Activated CD8-positive, alpha-beta T cell treated with anti-CD3 and anti-CD28 coated beads for 36 hours (primary cell): ENCODE measurements at regions of chr1 and their contacts with region 1.

Region 1: GRCh38 chr1:40951943-40952743 is 27.4 kb upstream of the CTPS1 start:
- DNase-seq: peak; percentile 68
- ATAC-seq: peak; percentile 67
- H3K4me3 Mint-ChIP-seq: no peak overlapping the region
- H3K27ac Mint-ChIP-seq: no peak overlapping the region
- H3K4me1 Mint-ChIP-seq: peaks cover 7% of the 10 kb centered on the region
- H3K27me3 Mint-ChIP-seq: peaks cover 15% of the 10 kb centered on the region
- CTCF ChIP-seq: peak; percentile 99

Region 2: GRCh38 chr1:40495315-40495903 is 456.7 kb before region 1 on chr1:
- CTCF ChIA-PET with region 1: no interaction called
- POLR2A ChIA-PET with region 1: no interaction called
- intact Hi-C with region 1: no loop called
- DNase-seq: no peak
- ATAC-seq: no peak
- H3K4me3 Mint-ChIP-seq: no peak overlapping the region
- H3K27ac Mint-ChIP-seq: no peak overlapping the region
- H3K4me1 Mint-ChIP-seq: peaks cover 2% of the 10 kb centered on the region
- H3K27me3 Mint-ChIP-seq: no peaks in the 10 kb centered on the region
- CTCF ChIP-seq: no peak

Region 3: GRCh38 chr1:40849801-40850592 is 102.1 kb before region 1 on chr1:
- CTCF ChIA-PET with region 1: interaction called, 73 read pairs
- POLR2A ChIA-PET with region 1: interaction called, 3 read pairs
- intact Hi-C with region 1: no loop called
- DNase-seq: peak; percentile 85
- ATAC-seq: peak; percentile 92
- H3K4me3 Mint-ChIP-seq: peak overlapping the region; percentile 22
- H3K27ac Mint-ChIP-seq: peak overlapping the region; percentile 49
- H3K4me1 Mint-ChIP-seq: peaks cover 12% of the 10 kb centered on the region
- H3K27me3 Mint-ChIP-seq: no peaks in the 10 kb centered on the region
- CTCF ChIP-seq: peak; percentile 86

Region 4: GRCh38 chr1:40862008-40862863 is 89.9 kb before region 1 on chr1 and contains the start of gene CITED4:
- CTCF ChIA-PET with region 1: interaction called, 36 read pairs
- POLR2A ChIA-PET with region 1: interaction called, 6 read pairs
- intact Hi-C with region 1: loop called (anchors 5 kb)
- DNase-seq: peak; percentile 96
- ATAC-seq: peak; percentile 95
- H3K4me3 Mint-ChIP-seq: peak within 1 kb of the TSS; percentile 77
- H3K27ac Mint-ChIP-seq: peak within 1 kb of the TSS; percentile 96
- H3K4me1 Mint-ChIP-seq: peaks cover 16% of the 10 kb centered on the region
- H3K27me3 Mint-ChIP-seq: peaks cover 3% of the 10 kb centered on the region
- CTCF ChIP-seq: no peak
- total RNA-seq, gene CITED4: 6.7 to 7.4 TPM

Region 5: GRCh38 chr1:40922981-40923380 is 29.2 kb before region 1 on chr1:
- CTCF ChIA-PET with region 1: interaction called, 13 read pairs
- POLR2A ChIA-PET with region 1: no interaction called
- intact Hi-C with region 1: no loop called
- DNase-seq: no peak
- ATAC-seq: no peak
- H3K4me3 Mint-ChIP-seq: no peak overlapping the region
- H3K27ac Mint-ChIP-seq: no peak overlapping the region
- H3K4me1 Mint-ChIP-seq: no peaks in the 10 kb centered on the region
- H3K27me3 Mint-ChIP-seq: no peaks in the 10 kb centered on the region
- CTCF ChIP-seq: no peak

Region 6: GRCh38 chr1:40965529-40965928 is 13.4 kb after region 1 on chr1:
- CTCF ChIA-PET with region 1: interaction called, 83 read pairs
- POLR2A ChIA-PET with region 1: interaction called, 3 read pairs
- intact Hi-C with region 1: no loop called
- DNase-seq: no peak
- ATAC-seq: no peak
- H3K4me3 Mint-ChIP-seq: no peak overlapping the region
- H3K27ac Mint-ChIP-seq: no peak overlapping the region
- H3K4me1 Mint-ChIP-seq: no peaks in the 10 kb centered on the region
- H3K27me3 Mint-ChIP-seq: peaks cover 1% of the 10 kb centered on the region
- CTCF ChIP-seq: no peak

Region 7: GRCh38 chr1:41013796-41014195 is 61.7 kb after region 1 on chr1:
- CTCF ChIA-PET with region 1: no interaction called
- POLR2A ChIA-PET with region 1: no interaction called
- intact Hi-C with region 1: no loop called
- DNase-seq: no peak
- ATAC-seq: no peak
- H3K4me3 Mint-ChIP-seq: no peak overlapping the region
- H3K27ac Mint-ChIP-seq: peak overlapping the region; percentile 22
- H3K4me1 Mint-ChIP-seq: peaks cover 10% of the 10 kb centered on the region
- H3K27me3 Mint-ChIP-seq: no peaks in the 10 kb centered on the region
- CTCF ChIP-seq: no peak

Region 8: DNA sequence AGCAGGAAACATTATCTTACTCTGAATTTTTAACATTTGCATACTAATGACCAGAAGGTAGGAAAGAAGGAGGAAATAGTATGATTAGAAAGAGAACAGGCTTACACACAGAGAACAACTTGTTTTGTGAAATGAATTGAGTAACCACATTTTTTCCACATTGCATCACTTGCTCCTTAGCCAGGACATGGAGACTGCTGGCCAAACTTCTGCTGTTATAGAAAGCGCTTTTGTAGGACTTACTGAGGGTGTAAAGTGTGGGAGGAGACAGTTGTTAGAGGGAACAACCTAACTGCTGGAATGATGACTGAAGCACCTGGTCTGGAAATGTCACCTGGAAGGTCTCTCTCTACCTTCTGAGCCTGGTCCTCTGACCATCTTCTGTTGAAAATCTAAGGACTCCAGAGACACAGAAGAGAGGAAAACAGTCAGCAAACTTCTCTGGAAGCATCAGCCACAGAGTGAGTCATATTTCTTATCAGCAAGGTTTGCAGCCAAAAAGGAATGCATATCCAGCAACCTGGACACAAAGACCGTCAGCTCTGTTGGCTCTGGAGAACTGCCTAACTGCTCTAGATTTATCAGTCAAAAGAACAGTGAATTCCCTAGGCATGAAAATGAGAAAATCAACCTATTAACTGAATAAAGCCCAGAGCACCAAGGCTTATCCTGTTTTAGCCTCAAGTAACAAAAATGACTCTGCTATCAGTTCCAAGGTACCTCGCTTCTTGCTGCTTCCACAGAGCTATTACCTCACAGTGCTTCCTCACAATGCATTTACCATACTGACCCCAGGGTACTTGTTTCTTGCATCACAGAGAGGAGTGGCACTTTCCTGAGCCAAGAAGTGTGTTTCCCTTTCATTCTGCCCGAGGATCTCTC is 157.4 kb after region 1 on chr1:
- CTCF ChIA-PET with region 1: no interaction called
- POLR2A ChIA-PET with region 1: no interaction called
- intact Hi-C with region 1: no loop called
- DNase-seq: no peak
- ATAC-seq: no peak
- H3K4me3 Mint-ChIP-seq: no peak overlapping the region
- H3K27ac Mint-ChIP-seq: no peak overlapping the region
- H3K4me1 Mint-ChIP-seq: peaks cover 3% of the 10 kb centered on the region
- H3K27me3 Mint-ChIP-seq: no peaks in the 10 kb centered on the region
- CTCF ChIP-seq: no peak

Region 9: DNA sequence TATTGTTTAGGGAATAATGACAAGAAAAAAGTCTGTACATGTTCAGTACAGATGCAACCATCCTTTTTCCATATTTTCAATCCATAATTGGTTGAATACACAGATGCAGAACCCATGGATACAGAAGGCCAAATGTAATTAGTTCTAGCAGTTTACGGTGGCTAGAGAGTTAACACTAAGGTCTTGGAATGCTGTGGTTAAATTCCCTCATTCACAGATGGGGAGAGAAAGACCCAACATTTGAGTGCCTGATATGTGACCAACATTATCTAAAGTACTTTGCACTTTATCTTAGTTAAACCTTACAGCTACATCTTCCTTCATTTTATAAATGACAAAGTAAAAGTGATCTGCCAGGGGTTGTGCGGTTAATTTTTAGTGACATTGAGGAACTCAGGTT is 284.6 kb after region 1 on chr1:
- CTCF ChIA-PET with region 1: no interaction called
- POLR2A ChIA-PET with region 1: no interaction called
- intact Hi-C with region 1: no loop called
- DNase-seq: no peak
- ATAC-seq: no peak
- H3K4me3 Mint-ChIP-seq: no peak overlapping the region
- H3K27ac Mint-ChIP-seq: no peak overlapping the region
- H3K4me1 Mint-ChIP-seq: peaks cover 20% of the 10 kb centered on the region
- H3K27me3 Mint-ChIP-seq: no peaks in the 10 kb centered on the region
- CTCF ChIP-seq: no peak